WTC11 (cell line): ENCODE measurements at regions of chr1 and their contacts with region 1.

Region 1: DNA sequence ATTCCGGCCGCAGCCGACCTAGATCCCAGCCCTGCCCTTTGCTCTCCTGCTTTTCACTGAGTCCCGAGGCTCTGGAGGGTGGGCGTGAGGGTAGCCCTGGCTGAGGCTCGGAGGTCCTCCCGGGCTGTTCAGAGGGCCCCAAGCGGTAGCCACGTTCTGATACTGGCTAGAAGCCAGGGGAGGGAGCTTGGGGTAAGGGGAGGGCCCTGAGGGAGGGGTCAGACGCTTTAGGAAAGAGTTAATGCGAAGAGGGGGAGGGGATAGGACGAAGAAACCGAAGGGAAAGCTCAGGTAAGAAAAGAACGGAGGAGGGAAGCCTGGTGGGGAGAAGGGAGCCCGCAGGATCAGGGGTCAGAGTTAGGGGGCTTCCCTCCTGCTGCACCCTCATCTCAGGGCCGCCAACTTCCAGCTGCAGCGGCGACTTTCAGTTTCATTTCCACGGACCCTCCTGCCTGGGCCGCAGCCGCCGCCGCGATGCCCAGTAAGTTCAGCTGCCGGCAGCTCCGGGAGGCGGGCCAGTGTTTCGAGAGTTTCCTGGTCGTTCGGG is at the start of gene MOV10:
- DNase-seq: peak; percentile 72
- ATAC-seq: peak; percentile 85
- H3K4me3 Mint-ChIP-seq: peak within 1 kb of the TSS; percentile 89
- H3K27ac Mint-ChIP-seq: peak within 1 kb of the TSS; percentile 92
- H3K4me1 Mint-ChIP-seq: peaks cover 68% of the 10 kb centered on the region
- H3K27me3 Mint-ChIP-seq: peaks cover 10% of the 10 kb centered on the region; the same call in 1 of the 2 replicates
- CTCF ChIP-seq: no peak
- total RNA-seq, gene MOV10: 80.7 to 99.1 TPM (median 98.8 TPM) in 3 replicates

Region 2: GRCh38 chr1:112619520-112620376 is 54.8 kb before region 1 on chr1 and contains the start of gene CAPZA1:
- CTCF ChIA-PET with region 1: interaction called, 10 read pairs
- POLR2A ChIA-PET with region 1: interaction called, 16 read pairs
- DNase-seq: peak; percentile 87
- ATAC-seq: peak; percentile 92
- H3K4me3 Mint-ChIP-seq: peak within 1 kb of the TSS; percentile 99
- H3K27ac Mint-ChIP-seq: peak within 1 kb of the TSS; percentile 99
- H3K4me1 Mint-ChIP-seq: peaks cover 21% of the 10 kb centered on the region
- H3K27me3 Mint-ChIP-seq: no peaks in the 10 kb centered on the region
- CTCF ChIP-seq: no peak
- total RNA-seq, gene CAPZA1: 86.6 to 97.5 TPM (median 91.3 TPM) in 3 replicates

Region 3: GRCh38 chr1:112700290-112701226 is 26.0 kb after region 1 on chr1:
- CTCF ChIA-PET with region 1: interaction called, 16 read pairs
- POLR2A ChIA-PET with region 1: interaction called, 11 read pairs
- DNase-seq: peak; percentile 77
- ATAC-seq: peak; percentile 45
- H3K4me3 Mint-ChIP-seq: peak overlapping the region; percentile 14; the same call in 1 of the 2 replicates
- H3K27ac Mint-ChIP-seq: no peak overlapping the region
- H3K4me1 Mint-ChIP-seq: peaks cover 79% of the 10 kb centered on the region
- H3K27me3 Mint-ChIP-seq: peaks cover 31% of the 10 kb centered on the region
- CTCF ChIP-seq: no peak

Region 4: DNA sequence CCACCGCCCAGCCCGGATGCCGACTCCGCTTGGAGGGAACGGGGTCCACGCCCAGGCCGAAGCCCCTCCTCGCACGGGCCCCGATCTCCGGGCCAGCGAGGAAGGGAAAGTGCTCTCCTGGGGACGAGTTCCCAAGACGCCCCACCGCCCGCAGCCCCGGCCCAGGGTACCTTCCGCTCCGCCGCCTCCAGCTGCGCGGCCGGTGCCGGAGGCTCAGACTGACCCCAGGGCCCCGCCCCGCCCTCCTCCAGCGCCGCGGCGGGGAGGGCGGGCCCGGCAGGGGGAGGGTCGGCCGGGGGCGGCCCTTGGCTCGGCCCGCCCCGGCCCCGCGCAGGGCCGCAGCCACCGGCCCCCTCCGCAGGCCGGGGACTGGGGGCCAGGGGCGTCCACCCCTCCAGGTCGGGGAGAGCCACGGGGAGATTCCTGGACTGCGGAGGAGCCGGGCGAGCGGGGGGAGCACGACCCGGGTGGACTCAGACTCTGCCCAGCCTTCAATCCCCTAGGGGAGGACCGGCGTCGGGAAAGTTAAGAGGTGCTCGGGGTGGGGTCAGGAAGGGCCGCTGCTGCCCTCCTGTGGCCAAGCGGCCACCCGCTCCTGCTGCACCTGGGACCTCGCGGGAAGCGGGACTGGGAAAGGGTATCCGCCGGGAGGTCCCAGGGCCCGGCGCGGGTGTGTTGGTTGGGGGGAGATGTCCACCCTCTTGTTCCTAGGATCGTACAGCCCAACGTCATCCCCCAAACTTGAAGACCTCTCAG is 32.6 kb after region 1 on chr1 and contains the start of gene RHOC:
- CTCF ChIA-PET with region 1: interaction called, 15 read pairs
- POLR2A ChIA-PET with region 1: interaction called, 11 read pairs
- DNase-seq: peak; percentile 90
- ATAC-seq: peak; percentile 59
- H3K4me3 Mint-ChIP-seq: peak within 1 kb of the TSS; percentile 73
- H3K27ac Mint-ChIP-seq: no peak within 1 kb of the TSS
- H3K4me1 Mint-ChIP-seq: peaks cover 63% of the 10 kb centered on the region
- H3K27me3 Mint-ChIP-seq: peaks cover 19% of the 10 kb centered on the region
- CTCF ChIP-seq: peak; percentile 79
- total RNA-seq, gene RHOC: 67.9 to 68.9 TPM (median 68.2 TPM) in 3 replicates